ENCODE measurements at regions of chr14 and their contacts with region 1.

Region 1: GRCh38 chr14:24431569-24432258 is 2.0 kb downstream of the KHNYN start:
- DNase-seq: peak; percentile 97
- ATAC-seq: peak; percentile 66
- H3K4me3 ChIP-seq: peak overlapping the region in 2 of 3 experiments; percentile 80 to 82; a peak in 4 of 6 replicates
- H3K27ac ChIP-seq: no peak overlapping the region
- H3K4me1 ChIP-seq: peaks cover 52% of the 10 kb centered on the region
- H3K27me3 ChIP-seq: no peaks in the 10 kb centered on the region; a peak in 1 of 5 replicates
- CTCF ChIP-seq: peak; percentile 100
- EP300 ChIP-seq: 0 out of 4 replicates have a peak, but pooled peaks of 1 of the 2 experiments have one; percentile 45
- POLR2A ChIP-seq: peak in 1 of 2 experiments; percentile 21; a peak in 2 of 4 replicates
- RAD21 ChIP-seq: peak; percentile 100

Region 2: DNA sequence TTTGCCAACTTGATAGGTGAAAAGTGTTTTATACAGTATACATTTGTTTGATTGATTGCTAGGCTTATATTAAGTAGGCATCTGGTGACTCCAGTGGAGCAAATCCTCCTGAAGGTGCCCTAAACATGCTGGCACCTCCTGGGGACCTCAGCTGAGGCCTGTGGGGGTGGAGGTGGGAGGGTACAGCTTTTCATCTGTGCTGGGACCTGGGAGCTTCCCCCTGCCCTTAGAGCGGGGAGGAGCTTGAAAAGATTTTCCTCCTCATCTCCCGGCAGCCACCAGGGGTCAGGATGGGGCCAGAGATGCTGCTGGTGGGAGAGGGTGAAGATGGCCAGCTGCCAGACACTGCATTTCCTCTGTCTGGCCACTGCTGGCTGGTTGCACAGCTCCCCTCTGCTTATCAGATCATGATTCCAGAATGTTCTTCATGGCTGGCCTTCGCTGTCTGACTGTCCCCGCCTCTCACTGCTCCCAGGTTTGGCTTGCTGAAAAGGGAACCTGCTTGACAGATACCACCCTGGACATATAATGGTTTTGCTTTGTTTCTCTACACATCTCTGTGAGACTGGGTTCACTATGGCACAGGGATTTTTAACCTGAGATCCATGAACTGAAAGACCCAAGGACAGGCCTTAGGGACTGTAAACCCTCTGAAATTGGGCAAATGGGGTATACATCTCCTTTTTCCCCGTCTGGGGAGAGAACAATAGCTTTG is 842.7 kb before region 1 on chr14:
- CTCF ChIA-PET with region 1: no interaction called
- POLR2A ChIA-PET with region 1: no interaction called
- in situ Hi-C with region 1: no loop called
- intact Hi-C with region 1: loop called (anchors 10 kb)
- DNase-seq: peak; percentile 98
- ATAC-seq: peak; percentile 98
- H3K4me3 ChIP-seq: peak overlapping the region in 1 of 3 experiments; percentile 9; a peak in 2 of 6 replicates
- H3K27ac ChIP-seq: no peak overlapping the region
- H3K4me1 ChIP-seq: peaks cover 24% of the 10 kb centered on the region
- H3K27me3 ChIP-seq: no peaks in the 10 kb centered on the region
- CTCF ChIP-seq: peak; percentile 100
- EP300 ChIP-seq: peak; percentile 87 to 90
- POLR2A ChIP-seq: no peak
- RAD21 ChIP-seq: peak; percentile 100

Region 3: DNA sequence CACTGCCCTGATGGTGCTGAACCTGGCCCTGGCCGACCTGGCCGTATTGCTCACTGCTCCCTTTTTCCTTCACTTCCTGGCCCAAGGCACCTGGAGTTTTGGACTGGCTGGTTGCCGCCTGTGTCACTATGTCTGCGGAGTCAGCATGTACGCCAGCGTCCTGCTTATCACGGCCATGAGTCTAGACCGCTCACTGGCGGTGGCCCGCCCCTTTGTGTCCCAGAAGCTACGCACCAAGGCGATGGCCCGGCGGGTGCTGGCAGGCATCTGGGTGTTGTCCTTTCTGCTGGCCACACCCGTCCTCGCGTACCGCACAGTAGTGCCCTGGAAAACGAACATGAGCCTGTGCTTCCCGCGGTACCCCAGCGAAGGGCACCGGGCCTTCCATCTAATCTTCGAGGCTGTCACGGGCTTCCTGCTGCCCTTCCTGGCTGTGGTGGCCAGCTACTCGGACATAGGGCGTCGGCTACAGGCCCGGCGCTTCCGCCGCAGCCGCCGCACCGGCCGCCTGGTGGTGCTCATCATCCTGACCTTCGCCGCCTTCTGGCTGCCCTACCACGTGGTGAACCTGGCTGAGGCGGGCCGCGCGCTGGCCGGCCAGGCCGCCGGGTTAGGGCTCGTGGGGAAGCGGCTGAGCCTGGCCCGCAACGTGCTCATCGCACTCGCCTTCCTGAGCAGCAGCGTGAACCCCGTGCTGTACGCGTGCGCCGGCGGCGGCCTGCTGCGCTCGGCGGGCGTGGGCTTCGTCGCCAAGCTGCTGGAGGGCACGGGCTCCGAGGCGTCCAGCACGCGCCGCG is 115.7 kb before region 1 on chr14:
- CTCF ChIA-PET with region 1: interaction called, 4 read pairs
- POLR2A ChIA-PET with region 1: interaction called, 22 read pairs
- in situ Hi-C with region 1: no loop called
- intact Hi-C with region 1: no loop called
- DNase-seq: peak; percentile 65
- ATAC-seq: peak; percentile 81
- H3K4me3 ChIP-seq: peak overlapping the region; percentile 29 to 73 (median 40)
- H3K27ac ChIP-seq: peak overlapping the region; percentile 18
- H3K4me1 ChIP-seq: peaks cover 37% of the 10 kb centered on the region
- H3K27me3 ChIP-seq: peaks cover 6 to 39% of the 10 kb centered on the region in 2 experiments; a peak in 4 of 5 replicates
- CTCF ChIP-seq: peak; percentile 88
- EP300 ChIP-seq: 0 out of 4 replicates have a peak, but pooled peaks of 1 of the 2 experiments have one; percentile 9
- POLR2A ChIP-seq: no peak; a peak in 2 of 4 replicates
- RAD21 ChIP-seq: peak; percentile 72

Region 4: DNA sequence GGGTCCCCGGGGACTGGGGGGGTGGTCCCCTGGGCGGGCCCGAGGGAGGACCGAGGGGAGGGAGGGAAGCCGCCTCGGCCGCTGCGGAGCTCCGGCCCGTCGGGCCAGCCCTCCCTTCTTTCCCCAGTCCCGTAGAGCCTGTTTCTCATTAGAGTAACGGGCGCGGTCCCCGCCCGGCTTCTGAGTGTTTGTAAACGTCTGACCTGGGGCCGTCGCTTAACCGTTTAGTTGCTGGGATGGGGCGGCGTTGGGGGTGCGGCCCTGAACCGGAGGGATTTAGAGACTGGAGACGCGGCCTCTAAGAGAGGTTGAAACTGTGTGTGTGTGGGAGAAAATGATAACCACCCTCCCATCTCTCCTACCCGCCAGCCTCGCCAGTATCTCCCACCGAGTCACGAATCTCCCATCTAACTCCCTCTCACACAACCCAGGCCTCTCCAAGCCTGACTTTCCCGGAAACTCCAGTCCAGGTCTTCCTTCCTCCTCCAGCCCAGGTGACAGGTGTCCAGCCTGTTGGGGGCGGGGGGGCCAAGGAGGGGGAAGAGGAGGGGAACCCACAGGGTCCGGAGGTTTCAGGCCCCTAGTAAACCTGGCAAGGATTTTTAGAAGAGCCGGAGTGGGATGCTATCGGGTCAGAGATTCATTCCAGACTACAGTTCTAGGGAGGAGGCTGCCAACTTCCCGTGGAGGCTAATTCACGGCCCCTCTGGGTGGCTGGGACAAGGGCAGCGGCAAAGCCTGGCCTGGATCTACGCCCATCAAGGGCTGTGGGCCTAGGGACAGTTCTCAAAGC is 64.8 kb before region 1 on chr14:
- CTCF ChIA-PET with region 1: interaction called, 295 read pairs
- POLR2A ChIA-PET with region 1: interaction called, 90 read pairs
- in situ Hi-C with region 1: loop called (anchors 5 kb)
- intact Hi-C with region 1: loop called (anchors 1 kb)
- DNase-seq: peak; percentile 92
- ATAC-seq: peak; percentile 83
- H3K4me3 ChIP-seq: peak overlapping the region; percentile 71 to 80 (median 74)
- H3K27ac ChIP-seq: no peak overlapping the region
- H3K4me1 ChIP-seq: peaks cover 26% of the 10 kb centered on the region
- H3K27me3 ChIP-seq: peaks cover 20 to 54% of the 10 kb centered on the region in 2 experiments
- CTCF ChIP-seq: no peak; the same call in 1 of the 2 replicates
- EP300 ChIP-seq: peak in 1 of 2 experiments; percentile 29; a peak in 1 of 4 replicates
- POLR2A ChIP-seq: no peak
- RAD21 ChIP-seq: no peak

Region 5: DNA sequence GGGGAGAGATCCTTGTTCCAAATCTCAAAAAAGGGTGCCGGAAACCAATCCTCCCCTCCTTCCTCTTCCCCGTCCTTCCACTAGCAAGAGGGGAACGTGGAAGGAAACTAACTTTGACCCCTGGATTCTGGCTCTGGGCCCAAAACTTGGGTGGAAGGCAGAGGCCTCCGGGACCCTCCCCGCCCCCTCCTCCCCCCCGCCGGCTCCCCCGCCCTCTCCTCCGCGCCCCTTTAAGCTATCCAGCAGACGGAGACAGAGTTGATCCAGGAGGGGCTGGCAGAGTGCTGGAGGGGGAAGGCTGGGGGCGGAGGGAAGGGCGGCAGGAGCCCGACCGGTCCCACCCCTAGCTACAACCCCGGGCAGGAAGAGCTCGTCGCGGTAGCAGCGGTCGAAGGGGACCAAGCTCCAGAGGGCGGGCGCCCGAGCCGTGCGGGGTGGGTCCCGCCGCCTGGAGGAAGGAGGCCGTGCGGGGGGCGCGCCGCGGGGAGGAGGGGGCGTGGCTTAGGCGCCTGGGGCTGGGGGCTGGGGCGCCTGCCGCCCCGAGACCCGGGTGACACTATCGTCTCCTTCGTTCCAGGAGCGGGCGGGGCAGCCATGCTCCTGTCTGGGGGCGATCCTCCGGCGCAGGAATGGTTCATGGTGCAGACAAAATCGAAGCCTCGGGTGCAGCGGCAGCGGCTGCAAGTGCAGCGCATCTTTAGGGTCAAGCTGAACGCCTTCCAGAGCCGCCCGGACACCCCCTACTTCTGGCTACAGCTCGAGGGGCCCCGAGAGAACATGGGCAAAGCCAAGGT is 32.9 kb before region 1 on chr14 and contains the start of gene NYNRIN:
- CTCF ChIA-PET with region 1: no interaction called
- POLR2A ChIA-PET with region 1: interaction called, 17 read pairs
- in situ Hi-C with region 1: no loop called
- intact Hi-C with region 1: loop called (anchors 2 kb)
- DNase-seq: no peak
- ATAC-seq: peak; percentile 78
- H3K4me3 ChIP-seq: peak within 1 kb of the TSS; percentile 54 to 74 (median 62)
- H3K27ac ChIP-seq: no peak within 1 kb of the TSS
- H3K4me1 ChIP-seq: peaks cover 43% of the 10 kb centered on the region
- H3K27me3 ChIP-seq: peaks cover 15 to 58% of the 10 kb centered on the region in 2 experiments
- CTCF ChIP-seq: 0 out of 2 replicates have a peak, but pooled peaks have one; percentile 5
- EP300 ChIP-seq: no peak
- POLR2A ChIP-seq: no peak
- RAD21 ChIP-seq: no peak
- total RNA-seq, gene NYNRIN: 1.1 and 1.3 TPM in 2 replicates

Region 6: DNA sequence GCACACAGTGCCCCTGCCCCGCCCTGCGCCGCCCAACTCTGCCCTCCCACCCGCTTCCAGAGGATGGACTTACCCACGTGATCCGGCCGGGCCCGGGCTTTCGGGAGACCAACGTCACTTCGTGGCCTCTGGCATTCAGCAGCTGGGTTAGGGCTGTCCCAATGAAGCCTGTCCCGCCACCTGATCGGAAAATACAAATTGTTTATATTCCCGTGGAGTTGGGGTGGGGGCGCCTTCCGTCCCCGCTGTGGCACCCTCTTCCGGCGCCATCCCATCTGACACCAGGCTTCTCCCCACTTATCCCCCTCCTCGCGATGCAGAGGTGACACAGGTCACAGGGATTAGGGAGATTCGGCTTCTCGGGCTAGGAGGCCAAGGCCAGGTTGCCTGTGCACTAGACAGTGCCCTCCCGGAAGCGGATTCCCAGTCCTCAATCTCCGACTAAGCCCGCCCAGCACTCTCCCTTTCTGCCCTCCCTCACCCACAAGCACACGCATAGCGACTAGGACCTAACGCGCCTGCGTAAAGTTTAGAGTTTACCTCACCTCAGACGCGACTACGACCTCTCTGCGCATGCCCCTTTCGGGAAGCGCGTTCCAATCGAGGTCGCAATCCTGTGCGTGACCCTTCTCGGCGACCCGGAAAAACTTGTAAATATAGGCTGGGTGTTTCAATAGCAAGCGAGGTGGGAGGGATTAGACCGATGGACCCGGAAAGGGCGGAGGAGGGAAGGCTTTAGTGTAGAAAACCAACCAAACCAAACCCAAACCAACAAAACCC is 10.7 kb after region 1 on chr14 and contains the start of gene SDR39U1:
- CTCF ChIA-PET with region 1: interaction called, 3 read pairs
- POLR2A ChIA-PET with region 1: interaction called, 242 read pairs
- in situ Hi-C with region 1: no loop called
- intact Hi-C with region 1: loop called (anchors 2 kb)
- DNase-seq: peak; percentile 100
- ATAC-seq: peak; percentile 91
- H3K4me3 ChIP-seq: peak within 1 kb of the TSS; percentile 74 to 98 (median 84)
- H3K27ac ChIP-seq: peak within 1 kb of the TSS; percentile 93
- H3K4me1 ChIP-seq: peaks cover 18% of the 10 kb centered on the region
- H3K27me3 ChIP-seq: peaks cover 0 to 5% of the 10 kb centered on the region in 2 experiments; a peak in 1 of 5 replicates
- CTCF ChIP-seq: peak; percentile 50
- EP300 ChIP-seq: 0 out of 4 replicates have a peak, but pooled peaks have one; percentile 44 to 47
- POLR2A ChIP-seq: peak in 1 of 2 experiments; percentile 98; a peak in 2 of 4 replicates
- RAD21 ChIP-seq: no peak; the same call in 1 of the 2 replicates
- total RNA-seq, gene SDR39U1: 25.0 and 34.4 TPM in 2 replicates

Region 7: GRCh38 chr14:24576182-24576581 is 144.5 kb after region 1 on chr14 and contains the start of gene CTSG:
- CTCF ChIA-PET with region 1: no interaction called
- POLR2A ChIA-PET with region 1: no interaction called
- in situ Hi-C with region 1: no loop called
- intact Hi-C with region 1: no loop called
- DNase-seq: no peak
- ATAC-seq: no peak
- H3K4me3 ChIP-seq: no peak within 1 kb of the TSS
- H3K27ac ChIP-seq: no peak within 1 kb of the TSS
- H3K4me1 ChIP-seq: no peaks in the 10 kb centered on the region
- H3K27me3 ChIP-seq: peaks cover 5 to 35% of the 10 kb centered on the region in 2 experiments; a peak in 4 of 5 replicates
- CTCF ChIP-seq: no peak
- EP300 ChIP-seq: no peak
- POLR2A ChIP-seq: no peak
- RAD21 ChIP-seq: no peak
- total RNA-seq, gene CTSG: not detected in 2 replicates

Measured in HepG2 (cell line).